ENCODE measurements at regions of chr11 and their contacts with region 1.

Region 1: DNA sequence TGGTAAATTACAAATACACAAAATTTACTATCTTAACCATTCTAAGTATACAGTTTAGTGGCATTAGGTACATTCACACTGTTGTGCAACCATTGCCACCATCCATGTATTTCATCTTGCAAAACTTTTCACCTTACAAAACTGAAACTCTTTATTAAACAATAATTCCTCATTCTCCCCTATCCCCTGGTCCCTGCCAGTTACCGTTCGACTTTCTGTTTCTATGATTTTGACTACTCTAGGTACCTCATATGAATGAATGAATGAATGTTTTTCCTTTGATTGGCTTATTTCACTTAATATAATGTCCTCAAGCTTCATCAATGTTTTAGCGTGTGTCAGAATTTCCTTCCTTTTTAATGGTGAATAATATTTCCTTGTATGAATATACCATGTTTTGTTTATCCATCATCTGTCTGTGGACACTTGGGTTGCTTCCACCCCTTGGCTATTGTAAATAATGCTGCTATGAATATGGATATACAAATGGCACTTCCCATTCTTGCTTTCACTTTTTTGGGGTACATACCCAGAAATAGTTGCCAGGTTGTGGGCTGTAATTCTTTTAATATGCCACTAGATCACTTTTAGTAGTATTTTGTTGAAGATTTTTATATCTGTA is 93.0 kb downstream of the UVRAG start:
- DNase-seq: no peak

Region 2: GRCh38 chr11:75946531-75947530 is 38.8 kb after region 1 on chr11:
- intact Hi-C with region 1: no loop called
- DNase-seq: no peak

Region 3: GRCh38 chr11:76152086-76152681 is 244.2 kb after region 1 on chr11:
- intact Hi-C with region 1: loop called in 1 of 2 experiments (anchors 5 kb)
- DNase-seq: peak; percentile 97

Region 4: GRCh38 chr11:76185931-76186401 is 277.9 kb after region 1 on chr11:
- intact Hi-C with region 1: loop called in 1 of 2 experiments (anchors 5 kb)
- DNase-seq: peak; percentile 89